HepG2 (cell line): ENCODE measurements at regions of chr6 and their contacts with region 1.

Region 1: GRCh38 chr6:15893556-15894268 is 230.9 kb upstream of the DTNBP1 start:
- DNase-seq: peak; percentile 16
- ATAC-seq: no peak
- H3K4me3 ChIP-seq: no peak overlapping the region
- H3K27ac ChIP-seq: no peak overlapping the region
- H3K4me1 ChIP-seq: no peaks in the 10 kb centered on the region
- H3K27me3 ChIP-seq: peaks cover 0 to 4% of the 10 kb centered on the region in 2 experiments; a peak in 1 of 5 replicates
- CTCF ChIP-seq: peak; percentile 55
- EP300 ChIP-seq: no peak
- POLR2A ChIP-seq: no peak
- RAD21 ChIP-seq: no peak

Region 2: DNA sequence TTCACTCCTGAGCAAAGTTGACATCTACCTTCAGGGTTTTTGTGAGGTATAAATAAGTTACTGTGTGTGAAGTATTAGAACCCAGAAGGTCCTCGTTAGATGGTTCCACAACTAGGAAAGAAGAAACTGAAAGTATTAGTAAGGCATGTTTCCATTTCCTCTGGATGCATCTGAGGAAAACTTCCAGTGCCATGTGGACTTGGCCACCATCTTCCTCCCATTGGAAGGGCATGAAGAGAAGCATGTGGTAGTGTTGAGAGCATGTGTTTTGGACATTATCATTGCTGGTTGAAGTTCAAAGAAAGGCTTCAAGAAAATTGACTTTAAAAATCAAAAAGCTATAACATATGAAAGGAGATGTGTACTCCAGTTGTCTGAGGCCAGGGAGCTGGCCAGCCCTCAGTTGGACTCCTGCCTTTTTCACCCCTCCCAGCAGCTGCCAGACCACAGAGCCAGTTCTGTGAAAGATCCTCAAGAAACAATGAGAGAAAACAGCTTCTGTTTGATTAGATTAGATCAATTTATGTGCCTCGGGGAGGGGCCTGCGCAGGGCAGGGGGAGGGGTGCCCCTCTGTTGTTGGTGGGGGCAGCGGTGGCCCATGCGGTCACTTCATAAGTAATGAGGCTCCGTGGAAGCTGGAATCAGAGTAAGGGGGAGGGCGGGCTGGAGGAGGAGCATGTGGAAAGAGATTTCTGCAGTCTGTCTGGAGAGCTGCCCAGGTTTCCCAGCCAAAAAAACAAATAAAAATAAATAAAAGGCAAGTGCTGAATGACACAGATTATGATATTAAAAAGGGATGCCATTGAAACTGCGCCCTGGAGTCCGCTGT is 493.9 kb before region 1 on chr6:
- CTCF ChIA-PET with region 1: no interaction called
- POLR2A ChIA-PET with region 1: no interaction called
- in situ Hi-C with region 1: no loop called
- intact Hi-C with region 1: loop called (anchors 5 kb)
- DNase-seq: no peak
- ATAC-seq: no peak
- H3K4me3 ChIP-seq: no peak overlapping the region
- H3K27ac ChIP-seq: no peak overlapping the region
- H3K4me1 ChIP-seq: peaks cover 31% of the 10 kb centered on the region
- H3K27me3 ChIP-seq: no peaks in the 10 kb centered on the region
- CTCF ChIP-seq: no peak
- EP300 ChIP-seq: no peak
- POLR2A ChIP-seq: no peak
- RAD21 ChIP-seq: no peak

Region 3: DNA sequence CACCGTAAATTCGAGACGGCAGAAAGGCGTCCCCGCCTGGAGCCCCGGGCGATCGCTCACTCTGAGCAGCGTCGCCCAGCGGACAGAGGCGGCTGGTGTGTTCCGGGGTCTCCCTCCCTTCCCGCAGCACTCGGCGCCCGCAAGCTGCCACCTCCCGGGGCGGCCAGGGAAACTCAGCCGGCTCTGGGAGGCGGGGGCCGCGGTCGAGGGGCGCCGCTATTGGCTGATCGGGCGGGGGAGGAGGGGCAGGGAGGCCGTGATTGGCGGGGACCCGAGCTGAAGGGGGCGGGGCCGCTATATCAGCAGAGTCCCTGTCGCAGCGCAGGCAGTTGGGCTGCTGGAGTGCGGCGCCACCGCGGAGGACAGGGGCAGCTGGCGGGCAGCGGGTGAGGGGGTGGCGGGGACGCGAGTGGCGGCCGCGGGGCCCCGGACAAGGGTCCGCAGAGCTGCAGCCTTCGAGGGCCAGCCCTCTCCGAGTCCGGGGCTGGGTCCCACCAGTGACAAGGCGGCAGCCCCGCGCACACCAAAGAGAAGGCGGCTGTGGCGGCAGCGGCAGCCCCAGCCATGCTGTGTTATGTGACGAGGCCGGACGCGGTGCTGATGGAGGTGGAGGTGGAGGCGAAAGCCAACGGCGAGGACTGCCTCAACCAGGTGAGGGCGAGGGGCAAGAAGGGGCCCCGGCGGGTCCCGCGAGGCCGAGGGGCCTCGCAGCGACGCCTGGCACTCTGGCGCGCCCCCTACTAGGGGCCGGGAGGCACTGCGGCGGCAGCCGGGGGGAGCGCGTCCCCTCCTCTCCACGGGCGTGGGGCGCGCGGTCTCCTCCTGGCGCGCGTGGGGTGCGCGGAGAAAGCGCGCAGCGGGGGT is 235.3 kb after region 1 on chr6 and contains the start of gene MYLIP:
- CTCF ChIA-PET with region 1: no interaction called
- POLR2A ChIA-PET with region 1: no interaction called
- in situ Hi-C with region 1: no loop called
- intact Hi-C with region 1: loop called (anchors 5 kb)
- DNase-seq: peak; percentile 93
- ATAC-seq: peak; percentile 94
- H3K4me3 ChIP-seq: peak within 1 kb of the TSS; percentile 78 to 95 (median 95)
- H3K27ac ChIP-seq: peak within 1 kb of the TSS; percentile 67
- H3K4me1 ChIP-seq: peaks cover 26% of the 10 kb centered on the region
- H3K27me3 ChIP-seq: peaks cover 0 to 32% of the 10 kb centered on the region in 2 experiments; a peak in 3 of 5 replicates
- CTCF ChIP-seq: peak; percentile 94
- EP300 ChIP-seq: peak in 1 of 2 experiments; percentile 19; a peak in 1 of 4 replicates
- POLR2A ChIP-seq: peak; percentile 98 to 100
- RAD21 ChIP-seq: peak; percentile 86
- total RNA-seq, gene MYLIP: 3.4 and 4.0 TPM in 2 replicates

Region 4: GRCh38 chr6:16183187-16183664 is 289.5 kb after region 1 on chr6:
- CTCF ChIA-PET with region 1: interaction called, 9 read pairs
- POLR2A ChIA-PET with region 1: no interaction called
- in situ Hi-C with region 1: no loop called
- intact Hi-C with region 1: loop called (anchors 1 kb)
- DNase-seq: peak; percentile 48
- ATAC-seq: no peak
- H3K4me3 ChIP-seq: no peak overlapping the region
- H3K27ac ChIP-seq: no peak overlapping the region
- H3K4me1 ChIP-seq: peaks cover 19% of the 10 kb centered on the region
- H3K27me3 ChIP-seq: no peaks in the 10 kb centered on the region; a peak in 1 of 5 replicates
- CTCF ChIP-seq: peak; percentile 65
- EP300 ChIP-seq: no peak
- POLR2A ChIP-seq: no peak
- RAD21 ChIP-seq: no peak